IMR-90 (cell line): ENCODE measurements at regions of chr3 and their contacts with region 1.

Region 1: GRCh38 chr3:36973774-36974173 is 19.2 kb downstream of the EPM2AIP1 start:
- DNase-seq: no peak
- ATAC-seq: no peak
- H3K4me3 ChIP-seq: no peak overlapping the region
- H3K27ac ChIP-seq: no peak overlapping the region
- H3K4me1 ChIP-seq: peaks cover 3% of the 10 kb centered on the region
- H3K27me3 ChIP-seq: no peaks in the 10 kb centered on the region
- CTCF ChIP-seq: no peak
- POLR2A ChIP-seq: no peak
- RAD21 ChIP-seq: no peak

Region 2: GRCh38 chr3:36937492-36937891 is 36.3 kb before region 1 on chr3:
- CTCF ChIA-PET with region 1: no interaction called
- POLR2A ChIA-PET with region 1: no interaction called
- dilution Hi-C with region 1: no loop called
- in situ Hi-C with region 1: no loop called
- intact Hi-C with region 1: no loop called
- DNase-seq: no peak
- ATAC-seq: peak; percentile 19; the same call in 1 of the 2 replicates
- H3K4me3 ChIP-seq: no peak overlapping the region
- H3K27ac ChIP-seq: no peak overlapping the region
- H3K4me1 ChIP-seq: peaks cover 18% of the 10 kb centered on the region
- H3K27me3 ChIP-seq: no peaks in the 10 kb centered on the region
- CTCF ChIP-seq: no peak
- POLR2A ChIP-seq: no peak
- RAD21 ChIP-seq: no peak

Region 3: DNA sequence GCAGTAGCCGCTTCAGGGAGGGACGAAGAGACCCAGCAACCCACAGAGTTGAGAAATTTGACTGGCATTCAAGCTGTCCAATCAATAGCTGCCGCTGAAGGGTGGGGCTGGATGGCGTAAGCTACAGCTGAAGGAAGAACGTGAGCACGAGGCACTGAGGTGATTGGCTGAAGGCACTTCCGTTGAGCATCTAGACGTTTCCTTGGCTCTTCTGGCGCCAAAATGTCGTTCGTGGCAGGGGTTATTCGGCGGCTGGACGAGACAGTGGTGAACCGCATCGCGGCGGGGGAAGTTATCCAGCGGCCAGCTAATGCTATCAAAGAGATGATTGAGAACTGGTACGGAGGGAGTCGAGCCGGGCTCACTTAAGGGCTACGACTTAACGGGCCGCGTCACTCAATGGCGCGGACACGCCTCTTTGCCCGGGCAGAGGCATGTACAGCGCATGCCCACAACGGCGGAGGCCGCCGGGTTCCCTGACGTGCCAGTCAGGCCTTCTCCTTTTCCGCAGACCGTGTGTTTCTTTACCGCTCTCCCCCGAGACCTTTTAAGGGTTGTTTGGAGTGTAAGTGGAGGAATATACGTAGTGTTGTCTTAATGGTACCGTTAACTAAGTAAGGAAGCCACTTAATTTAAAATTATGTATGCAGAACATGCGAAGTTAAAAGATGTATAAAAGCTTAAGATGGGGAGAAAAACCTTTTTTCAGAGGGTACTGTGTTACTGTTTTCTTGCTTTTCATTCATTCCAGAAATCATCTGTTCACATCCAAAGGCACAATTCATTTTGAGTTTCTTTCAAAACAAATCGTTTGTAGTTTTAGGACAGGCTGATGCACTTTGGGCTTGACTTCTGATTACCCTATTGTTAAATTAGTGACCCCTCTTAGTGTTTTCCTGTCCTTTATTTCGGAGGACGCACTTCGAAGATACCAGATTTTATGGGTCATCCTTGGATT is 19.8 kb after region 1 on chr3 and contains the start of gene MLH1:
- CTCF ChIA-PET with region 1: no interaction called
- POLR2A ChIA-PET with region 1: interaction called, 10 read pairs
- dilution Hi-C with region 1: no loop called
- in situ Hi-C with region 1: no loop called
- intact Hi-C with region 1: no loop called
- DNase-seq: peak; percentile 100
- ATAC-seq: peak; percentile 91
- H3K4me3 ChIP-seq: peak within 1 kb of the TSS; percentile 63
- H3K27ac ChIP-seq: peak within 1 kb of the TSS; percentile 90
- H3K4me1 ChIP-seq: peaks cover 3% of the 10 kb centered on the region; the same call in 1 of the 2 replicates
- H3K27me3 ChIP-seq: no peaks in the 10 kb centered on the region
- CTCF ChIP-seq: no peak
- POLR2A ChIP-seq: peak; percentile 89
- RAD21 ChIP-seq: no peak
- total RNA-seq, gene MLH1: 46.7 and 54.1 TPM in 2 replicates